Activated CD4-positive, alpha-beta T cell treated with anti-CD3 and anti-CD28 coated beads for 36 hours (primary cell): ENCODE measurements at regions of chr12 and their contacts with region 1.

Region 1: GRCh38 chr12:122203301-122204166 is at the start of gene B3GNT4:
- DNase-seq: peak; percentile 85
- ATAC-seq: peak; percentile 81
- H3K4me3 Mint-ChIP-seq: peak within 1 kb of the TSS; percentile 74
- H3K27ac Mint-ChIP-seq: no peak within 1 kb of the TSS
- H3K4me1 Mint-ChIP-seq: peaks cover 12% of the 10 kb centered on the region
- H3K27me3 Mint-ChIP-seq: peaks cover 17% of the 10 kb centered on the region
- total RNA-seq, gene B3GNT4: 2.0 to 2.6 TPM

Region 2: DNA sequence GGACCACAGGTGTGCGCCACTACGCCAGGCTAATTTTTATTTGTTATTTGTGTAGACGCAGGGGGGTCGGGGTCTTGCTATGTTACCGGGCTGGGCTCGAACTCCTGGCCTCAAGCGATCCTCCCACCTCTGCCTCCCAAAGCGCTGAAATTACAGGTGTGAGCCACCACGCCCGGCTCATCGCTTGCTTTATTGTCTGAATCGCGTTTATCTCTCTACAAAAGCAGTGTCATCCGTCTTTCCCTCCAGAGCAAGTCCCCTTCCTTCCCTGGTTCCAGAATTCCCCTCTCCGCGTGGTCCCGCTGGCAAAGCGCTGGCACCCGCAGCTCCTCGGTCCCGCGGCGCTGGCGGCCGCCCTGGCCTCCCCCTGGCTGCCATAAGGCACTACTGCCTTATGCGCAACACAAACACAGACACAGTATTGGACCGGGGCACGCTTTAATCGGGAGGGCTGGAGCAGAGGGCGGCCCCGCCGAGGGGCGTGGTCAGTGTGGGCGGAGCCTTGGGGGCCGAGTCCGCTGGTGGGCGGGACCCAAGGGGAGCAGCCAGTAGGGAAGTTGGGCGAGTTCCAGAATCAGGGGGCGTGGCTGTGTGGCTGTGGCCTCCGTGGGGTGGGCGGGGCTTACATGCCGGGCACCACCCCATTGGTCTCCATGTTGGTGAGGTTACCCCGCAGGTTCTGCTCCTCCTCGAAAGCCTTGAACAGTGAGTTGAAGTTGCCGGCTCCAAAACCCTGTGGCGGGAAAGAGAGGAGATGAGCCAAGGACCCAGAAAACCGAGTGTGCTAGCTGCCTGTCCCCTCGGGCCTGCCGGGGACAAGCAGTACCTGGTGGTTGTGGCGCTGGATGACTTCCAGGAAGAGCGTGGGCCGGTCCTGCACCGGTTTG is 364.2 kb before region 1 on chr12:
- CTCF ChIA-PET with region 1: no interaction called
- POLR2A ChIA-PET with region 1: no interaction called
- intact Hi-C with region 1: loop called in 1 of 2 experiments (anchors 1 kb)
- DNase-seq: peak; percentile 100
- ATAC-seq: peak; percentile 94
- H3K4me3 Mint-ChIP-seq: peak overlapping the region; percentile 91
- H3K27ac Mint-ChIP-seq: peak overlapping the region; percentile 91
- H3K4me1 Mint-ChIP-seq: peaks cover 14% of the 10 kb centered on the region
- H3K27me3 Mint-ChIP-seq: no peaks in the 10 kb centered on the region

Region 3: DNA sequence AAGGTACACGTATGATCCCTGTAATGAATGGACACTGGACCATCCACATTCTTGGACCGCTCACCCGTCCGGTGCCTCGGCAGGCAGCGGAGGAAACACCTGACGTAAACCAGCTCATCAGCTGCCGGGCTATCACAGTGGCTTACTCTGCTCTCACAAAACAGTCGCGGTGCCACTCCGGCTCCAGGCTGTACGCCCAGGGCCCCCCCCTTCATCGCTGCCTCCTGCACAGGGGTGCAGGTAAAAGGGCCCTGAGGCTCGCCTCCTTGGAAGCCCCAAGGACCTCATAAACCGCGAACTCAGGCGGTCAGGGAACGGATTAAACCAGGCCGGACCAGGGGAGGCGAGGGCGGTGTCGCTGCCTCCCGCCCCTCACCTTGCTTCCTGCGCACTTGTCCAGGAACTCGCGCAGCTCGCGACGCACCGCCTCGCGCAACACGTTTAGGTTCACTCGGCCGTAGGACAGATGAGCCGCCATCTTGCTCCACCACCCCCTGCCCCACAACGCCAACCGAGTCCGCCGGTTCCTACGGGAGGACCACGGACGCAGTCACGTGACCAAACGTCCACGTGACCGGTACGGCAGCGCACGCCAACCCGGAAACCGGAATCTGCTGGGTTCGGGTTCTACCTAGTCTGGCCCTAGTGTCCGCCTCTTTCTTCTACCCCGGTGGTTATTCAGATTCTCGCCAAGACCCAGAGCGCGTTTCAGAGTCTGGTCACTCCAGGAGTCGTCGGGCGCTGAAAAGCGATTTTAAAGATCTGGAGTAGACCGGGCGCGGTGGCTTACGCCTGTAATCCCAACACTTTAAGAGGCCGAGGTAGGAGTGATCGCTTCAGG is 62.6 kb after region 1 on chr12 and contains the start of gene VPS33A:
- CTCF ChIA-PET with region 1: no interaction called
- POLR2A ChIA-PET with region 1: no interaction called
- intact Hi-C with region 1: loop called in 1 of 2 experiments (anchors 1 kb)
- DNase-seq: peak; percentile 98
- ATAC-seq: peak; percentile 86
- H3K4me3 Mint-ChIP-seq: peak within 1 kb of the TSS; percentile 97
- H3K27ac Mint-ChIP-seq: peak within 1 kb of the TSS; percentile 98
- H3K4me1 Mint-ChIP-seq: peaks cover 23% of the 10 kb centered on the region
- H3K27me3 Mint-ChIP-seq: no peaks in the 10 kb centered on the region
- total RNA-seq, gene VPS33A: 24.8 to 26.4 TPM